Aorta (tissue), 5 donors: ENCODE measurements at regions of chr1 and their contacts with region 1.

Region 1: DNA sequence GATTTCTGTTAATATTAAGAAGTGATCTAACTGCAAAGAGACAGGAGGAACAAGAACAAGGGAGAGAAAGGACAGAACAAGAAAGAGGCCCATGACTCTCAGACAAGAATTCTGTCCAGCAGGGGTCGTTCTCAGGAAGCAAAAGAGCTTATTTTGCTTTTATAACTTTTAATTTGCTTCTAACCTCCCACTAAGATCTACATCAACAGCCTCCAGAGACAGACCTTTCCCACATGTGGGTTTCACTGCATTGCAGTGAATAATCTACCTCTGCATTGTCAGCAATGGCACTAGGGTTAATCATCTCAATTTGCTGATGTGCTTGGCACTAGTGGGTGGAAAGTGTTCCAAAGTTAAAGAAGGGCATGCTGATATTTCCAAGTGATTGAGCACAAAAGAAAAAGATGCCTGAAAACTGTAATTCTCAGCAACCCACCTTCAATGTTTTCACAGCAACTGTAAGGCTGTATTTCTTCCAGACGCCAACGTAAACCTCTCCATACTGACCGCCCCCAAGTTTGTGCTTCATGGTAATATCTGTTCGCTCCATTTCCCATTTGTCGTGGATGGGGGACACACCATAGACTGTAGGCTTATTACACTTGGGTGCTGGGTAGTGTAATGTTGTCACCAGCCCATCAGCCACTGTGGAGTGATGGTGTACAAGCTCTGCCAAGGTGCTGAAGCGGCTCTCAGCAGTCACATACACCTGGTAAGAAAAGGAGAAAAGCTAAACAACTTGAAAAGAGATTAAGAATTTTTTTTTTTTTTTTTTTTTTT is 39.5 kb downstream of the TOR3A start:
- DNase-seq: no peak
- ATAC-seq: peak; percentile 64
- H3K4me3 ChIP-seq: no peak overlapping the region
- H3K27ac ChIP-seq: no peak overlapping the region
- H3K4me1 ChIP-seq: no peaks in the 10 kb centered on the region
- H3K27me3 ChIP-seq: no peaks in the 10 kb centered on the region

Region 2: GRCh38 chr1:178885869-178886268 is 235.5 kb before region 1 on chr1:
- intact Hi-C with region 1: no loop called
- DNase-seq: no peak
- ATAC-seq: no peak
- H3K4me3 ChIP-seq: no peak overlapping the region
- H3K27ac ChIP-seq: no peak overlapping the region
- H3K4me1 ChIP-seq: no peaks in the 10 kb centered on the region
- H3K27me3 ChIP-seq: no peaks in the 10 kb centered on the region

Region 3: GRCh38 chr1:179081687-179082332 is 39.5 kb before region 1 on chr1 and contains the start of gene TOR3A:
- intact Hi-C with region 1: loop called in 1 of 2 experiments (anchors 5 kb)
- DNase-seq: peak; percentile 96
- ATAC-seq: peak; percentile 97
- H3K4me3 ChIP-seq: peak within 1 kb of the TSS; percentile 44 to 80
- H3K27ac ChIP-seq: peak within 1 kb of the TSS in 1 of 2 donors; percentile 92
- H3K4me1 ChIP-seq: peaks cover 0 to 3% of the 10 kb centered on the region in 2 donors
- H3K27me3 ChIP-seq: no peaks in the 10 kb centered on the region
- total RNA-seq, gene TOR3A: 13.9 to 18.5 TPM

Region 4: DNA sequence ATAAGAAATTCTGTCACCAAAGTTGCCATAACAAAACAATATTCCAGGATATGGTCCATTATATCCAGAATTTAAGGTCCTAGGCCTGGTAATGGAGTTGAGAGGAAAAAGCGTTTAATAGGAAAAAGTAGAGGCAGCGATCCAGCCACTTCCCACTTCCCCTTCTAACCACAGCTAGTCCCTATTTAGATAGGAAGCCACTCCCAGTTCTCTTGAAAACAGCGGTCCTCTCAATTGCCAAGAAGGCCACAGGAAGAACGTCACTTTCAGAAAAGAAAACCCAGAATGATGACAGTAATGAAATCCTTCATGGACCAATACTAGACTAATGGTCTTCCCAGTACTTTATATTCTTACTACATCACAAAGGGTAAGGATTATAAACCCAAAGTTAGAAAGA is 69.5 kb after region 1 on chr1:
- intact Hi-C with region 1: loop called (anchors 2 to 5 kb)
- DNase-seq: no peak
- ATAC-seq: peak; percentile 72
- H3K4me3 ChIP-seq: no peak overlapping the region
- H3K27ac ChIP-seq: no peak overlapping the region
- H3K4me1 ChIP-seq: no peaks in the 10 kb centered on the region
- H3K27me3 ChIP-seq: no peaks in the 10 kb centered on the region

Region 5: DNA sequence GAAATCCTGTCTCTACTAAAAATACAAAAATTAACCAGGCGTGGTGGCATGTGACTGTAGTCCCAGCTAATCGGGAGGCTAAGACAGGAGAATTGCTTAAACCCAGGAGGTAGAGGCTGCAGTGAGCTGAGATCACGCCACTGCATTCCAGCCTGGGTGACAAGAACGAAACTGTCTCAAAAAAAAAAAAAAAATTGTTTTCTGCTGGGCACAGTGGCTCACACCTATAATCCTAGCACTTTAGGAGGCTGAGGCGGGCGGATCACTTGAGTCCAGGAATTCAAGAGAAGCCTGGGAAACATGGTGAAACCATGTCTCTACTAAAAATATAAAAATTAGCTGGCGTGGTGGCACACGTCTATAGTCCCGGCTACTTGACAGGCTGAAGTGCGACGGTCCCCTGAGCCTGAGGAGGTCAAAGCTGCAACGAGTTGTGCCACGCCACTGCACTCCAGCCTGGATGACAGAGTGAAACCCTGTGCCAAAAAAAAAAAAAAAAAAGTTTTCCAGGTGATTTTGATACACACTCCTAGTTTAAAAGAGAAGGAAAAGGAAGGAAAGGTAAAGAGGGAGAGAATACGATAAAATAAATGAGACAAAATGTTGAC is 76.4 kb after region 1 on chr1:
- intact Hi-C with region 1: loop called (anchors 2 to 5 kb)
- DNase-seq: no peak
- ATAC-seq: no peak
- H3K4me3 ChIP-seq: no peak overlapping the region
- H3K27ac ChIP-seq: no peak overlapping the region
- H3K4me1 ChIP-seq: no peaks in the 10 kb centered on the region
- H3K27me3 ChIP-seq: no peaks in the 10 kb centered on the region

Region 6: DNA sequence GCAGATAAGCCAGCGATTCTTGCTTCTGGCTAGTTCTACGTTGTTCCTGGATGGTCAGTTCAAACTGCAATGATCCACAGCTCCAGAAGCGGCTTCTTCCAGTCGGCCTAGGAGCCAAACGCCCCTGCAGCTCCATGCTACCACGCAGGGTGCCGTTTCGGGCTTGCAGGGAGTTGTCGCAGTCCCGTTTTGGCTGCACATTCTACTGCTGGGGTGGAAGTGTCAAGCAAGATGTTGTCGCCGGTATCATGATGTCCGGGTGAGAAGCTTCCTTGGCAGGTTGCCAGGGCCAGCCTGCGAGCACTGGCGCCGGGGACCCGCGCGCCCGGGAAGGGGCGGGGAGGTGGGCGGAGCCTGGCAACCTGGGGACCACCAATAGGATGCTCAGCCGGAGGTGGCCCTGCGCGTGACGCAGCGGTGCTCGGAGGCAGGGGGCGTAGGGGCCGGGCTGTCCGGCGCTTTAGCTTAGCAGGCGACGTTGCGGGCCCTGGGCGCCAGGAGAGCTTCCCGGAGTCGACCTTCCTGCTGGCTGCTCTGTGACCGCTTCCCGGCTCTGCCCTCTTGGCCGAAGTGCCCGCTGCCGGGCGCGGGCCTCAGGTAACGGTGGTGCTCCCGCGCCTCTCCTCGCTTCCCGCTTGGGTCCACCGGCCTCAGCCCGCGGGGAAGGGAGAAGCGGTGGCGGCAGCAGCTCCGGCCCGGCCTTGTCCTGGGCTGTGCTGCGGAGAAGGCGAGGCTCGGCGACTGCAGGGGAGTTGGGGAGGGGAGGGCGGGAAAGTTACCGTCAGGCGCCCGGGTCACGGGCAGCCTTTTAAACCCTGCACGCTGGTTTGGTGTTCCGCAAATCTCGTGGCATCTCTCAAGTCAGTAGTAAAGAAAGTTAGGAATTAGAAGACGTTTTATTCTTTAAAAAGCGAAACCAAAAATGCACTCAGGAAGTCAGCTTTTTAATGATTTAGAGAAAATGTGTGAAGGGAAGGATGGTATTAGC is 172.3 kb after region 1 on chr1 and contains the start of gene SOAT1:
- intact Hi-C with region 1: loop called (anchors 2 to 5 kb)
- DNase-seq: peak; percentile 97 to 98
- ATAC-seq: peak; percentile 98
- H3K4me3 ChIP-seq: peak within 1 kb of the TSS; percentile 63 to 75
- H3K27ac ChIP-seq: peak within 1 kb of the TSS; percentile 2 to 87
- H3K4me1 ChIP-seq: peaks cover 2 to 3% of the 10 kb centered on the region in 2 donors
- H3K27me3 ChIP-seq: no peaks in the 10 kb centered on the region
- total RNA-seq, gene SOAT1: 38.6 to 42.7 TPM